ENCODE measurements at regions of chr20 and their contacts with region 1.

Region 1: DNA sequence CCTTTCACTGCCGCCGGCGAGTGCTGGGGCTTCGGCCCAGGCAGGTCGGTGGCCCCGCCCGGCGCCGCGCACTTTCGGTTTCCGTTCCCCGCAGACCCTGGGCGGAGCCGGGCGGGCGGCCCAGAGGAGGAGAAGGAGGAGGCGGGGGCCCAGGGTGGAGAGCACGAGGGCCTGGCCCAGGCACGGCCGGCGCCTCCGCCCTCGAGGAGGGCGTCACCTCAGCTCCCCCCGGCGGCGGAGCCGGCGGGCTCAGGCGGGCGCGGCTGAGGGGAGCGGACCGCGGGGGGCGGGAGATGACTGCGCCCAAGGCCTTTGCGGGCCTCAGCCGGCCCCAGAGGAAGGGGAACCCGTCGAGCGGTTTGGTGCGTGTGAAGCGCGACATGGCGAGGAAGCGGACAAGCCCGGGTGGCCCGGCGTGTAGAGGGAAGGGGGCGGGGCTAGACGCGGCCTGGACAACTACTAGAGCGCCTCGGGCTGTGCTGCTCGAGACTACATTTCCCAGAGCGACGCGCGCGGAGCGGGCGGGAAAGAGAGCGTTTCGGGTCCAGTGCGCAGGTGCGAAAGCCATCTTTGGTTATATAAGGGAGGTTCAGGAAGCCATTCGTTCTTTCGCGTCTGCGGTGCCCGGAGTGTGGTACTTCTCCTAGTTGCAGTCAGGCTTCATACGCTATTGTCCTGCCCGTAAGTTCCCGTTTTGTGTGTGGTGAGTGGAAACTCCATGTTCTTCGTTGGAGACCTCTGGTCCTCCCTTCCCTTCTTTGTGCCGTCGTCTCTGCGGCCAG is at the start of gene ZNFX1:
- DNase-seq: peak; percentile 94 to 99 (median 97)
- ATAC-seq: peak; percentile 92
- H3K4me3 ChIP-seq: peak within 1 kb of the TSS; percentile 80
- H3K4me3 Mint-ChIP-seq: peak within 1 kb of the TSS; percentile 91 to 100 (median 97)
- H3K27ac ChIP-seq: peak within 1 kb of the TSS; percentile 95
- H3K27ac Mint-ChIP-seq: peak within 1 kb of the TSS; percentile 90 to 99 (median 97)
- H3K4me1 ChIP-seq: peaks cover 37 to 61% of the 10 kb centered on the region in 2 donors
- H3K4me1 Mint-ChIP-seq: peaks cover 52 to 80% (median 67%) of the 10 kb centered on the region in 7 donors
- H3K27me3 ChIP-seq: no peaks in the 10 kb centered on the region
- H3K27me3 Mint-ChIP-seq: peaks cover 0 to 4% (median 0%) of the 10 kb centered on the region in 5 donors
- total RNA-seq, gene ZNFX1: 45.0 to 83.7 (median 62.2) TPM

Region 2: GRCh38 chr20:47501483-47502270 is 1776.5 kb before region 1 on chr20 and contains the start of gene NCOA3:
- CTCF ChIA-PET with region 1: no interaction called
- POLR2A ChIA-PET with region 1: no interaction called
- intact Hi-C with region 1: loop called in 1 of 2 experiments (anchors 1 kb)
- DNase-seq: peak; percentile 74 to 94 (median 83)
- ATAC-seq: peak; percentile 95
- H3K4me3 ChIP-seq: peak within 1 kb of the TSS; percentile 86
- H3K4me3 Mint-ChIP-seq: peak within 1 kb of the TSS; percentile 80 to 99 (median 97)
- H3K27ac ChIP-seq: peak within 1 kb of the TSS; percentile 80
- H3K27ac Mint-ChIP-seq: peak within 1 kb of the TSS; percentile 80 to 98 (median 95)
- H3K4me1 ChIP-seq: peaks cover 19 to 28% of the 10 kb centered on the region in 2 donors
- H3K4me1 Mint-ChIP-seq: peaks cover 25 to 48% (median 43%) of the 10 kb centered on the region in 7 donors
- H3K27me3 ChIP-seq: no peaks in the 10 kb centered on the region
- H3K27me3 Mint-ChIP-seq: peaks cover 0 to 2% (median 0%) of the 10 kb centered on the region in 5 donors
- total RNA-seq, gene NCOA3: 75.0 to 115 (median 89.2) TPM

Region 3: DNA sequence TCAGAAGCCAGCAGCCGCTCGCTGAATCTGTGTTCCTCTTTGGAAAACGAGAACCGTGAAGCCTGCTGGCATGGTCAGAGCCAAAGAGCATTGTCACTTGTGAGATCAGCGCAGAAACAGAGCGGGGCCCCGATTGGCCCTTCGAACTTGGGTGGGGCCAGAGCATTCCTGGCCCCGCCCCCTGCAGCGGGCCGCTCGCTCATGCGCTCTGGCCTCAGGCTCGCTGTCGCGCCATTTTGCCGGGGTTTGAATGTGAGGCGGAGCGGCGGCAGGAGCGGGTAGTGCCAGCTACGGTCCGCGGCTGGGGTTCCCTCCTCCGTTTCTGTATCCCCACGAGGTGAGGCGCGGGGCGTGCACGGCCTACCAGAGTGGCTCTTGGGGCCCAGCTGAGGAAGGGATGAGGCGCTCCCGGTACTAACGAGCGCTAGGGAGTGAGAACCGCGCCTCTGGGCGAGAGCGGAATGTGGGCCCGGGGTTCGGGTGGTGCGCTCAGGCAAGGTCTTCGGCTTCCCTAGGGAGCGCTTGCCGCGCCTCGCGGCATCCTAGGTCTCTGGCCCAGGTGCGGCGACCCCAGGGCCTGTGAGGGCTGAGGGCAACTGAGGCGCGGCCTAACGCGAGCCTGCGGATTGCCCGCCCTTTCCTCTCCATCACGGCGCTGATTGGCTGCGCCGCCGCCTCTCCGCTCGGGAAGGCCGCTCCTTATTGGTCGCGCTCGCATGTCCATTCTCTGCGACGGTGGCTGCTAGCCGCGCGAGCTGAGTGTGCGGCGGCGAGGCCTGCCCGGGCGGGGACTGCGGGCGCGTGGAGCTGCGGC is 231.9 kb before region 1 on chr20 and contains the start of gene CSE1L:
- CTCF ChIA-PET with region 1: no interaction called
- POLR2A ChIA-PET with region 1: interaction called, 7 read pairs
- intact Hi-C with region 1: loop called (anchors 1 kb)
- DNase-seq: peak; percentile 90 to 98 (median 95)
- ATAC-seq: peak; percentile 92
- H3K4me3 ChIP-seq: peak within 1 kb of the TSS; percentile 99
- H3K4me3 Mint-ChIP-seq: peak within 1 kb of the TSS; percentile 94 to 99 (median 98)
- H3K27ac ChIP-seq: peak within 1 kb of the TSS; percentile 89
- H3K27ac Mint-ChIP-seq: peak within 1 kb of the TSS; percentile 92 to 100 (median 98)
- H3K4me1 ChIP-seq: peaks cover 11 to 14% of the 10 kb centered on the region in 2 donors
- H3K4me1 Mint-ChIP-seq: peaks cover 24 to 51% (median 42%) of the 10 kb centered on the region in 7 donors
- H3K27me3 ChIP-seq: no peaks in the 10 kb centered on the region
- H3K27me3 Mint-ChIP-seq: peaks cover 0 to 4% (median 0%) of the 10 kb centered on the region in 5 donors
- total RNA-seq, gene CSE1L: 23.3 to 73.0 (median 41.1) TPM

Region 4: DNA sequence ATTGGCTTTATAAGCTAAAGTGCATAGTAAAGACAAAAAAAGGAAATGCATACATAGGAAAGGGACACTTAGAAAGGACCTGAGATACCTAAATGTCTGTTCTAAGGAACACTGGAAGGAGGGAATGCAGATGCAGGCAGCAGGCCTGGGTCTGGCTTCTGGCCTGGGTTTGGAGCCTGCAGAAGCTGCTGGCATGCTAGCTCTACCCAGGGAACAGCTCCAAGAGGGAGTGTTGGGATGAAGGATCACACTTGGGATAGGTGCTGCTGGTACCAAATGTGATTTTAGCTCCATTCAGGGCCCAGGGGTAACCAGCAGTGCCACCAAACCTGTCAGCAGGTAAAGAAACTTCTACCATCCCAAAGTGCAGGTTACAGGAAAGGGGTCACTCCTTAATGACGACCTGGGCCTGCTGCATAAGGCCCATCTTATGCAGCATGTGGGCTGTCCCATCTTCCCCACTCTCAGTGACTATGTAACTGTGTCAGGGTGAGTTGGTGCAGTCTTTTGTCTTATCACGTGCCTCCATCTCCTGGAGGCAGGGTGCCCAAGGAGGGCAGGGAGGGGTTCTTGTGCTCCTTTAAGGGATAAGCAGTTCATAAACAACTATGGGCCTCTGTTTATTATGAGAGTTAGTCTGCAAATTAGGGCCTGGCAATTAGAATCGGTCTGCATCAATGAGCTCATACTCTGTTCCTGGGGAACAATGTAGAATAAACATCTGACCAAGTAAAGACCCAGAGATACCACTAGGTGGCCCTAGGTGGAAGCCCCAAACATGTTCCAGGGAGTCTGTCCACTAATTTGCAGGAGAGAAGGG is 32.1 kb before region 1 on chr20:
- CTCF ChIA-PET with region 1: interaction called, 4 read pairs
- POLR2A ChIA-PET with region 1: interaction called, 3 read pairs
- intact Hi-C with region 1: loop called in 1 of 2 experiments (anchors 1 kb)
- DNase-seq: peak in 5 of 9 donors; percentile 17 to 37 (median 20)
- ATAC-seq: peak; percentile 77
- H3K4me3 ChIP-seq: no peak overlapping the region
- H3K4me3 Mint-ChIP-seq: no peak overlapping the region
- H3K27ac ChIP-seq: peak overlapping the region; percentile 18
- H3K27ac Mint-ChIP-seq: peak overlapping the region in 8 of 9 donors; percentile 1 to 84 (median 62)
- H3K4me1 ChIP-seq: peaks cover 0 to 6% of the 10 kb centered on the region in 2 donors
- H3K4me1 Mint-ChIP-seq: peaks cover 4 to 13% (median 5%) of the 10 kb centered on the region in 7 donors
- H3K27me3 ChIP-seq: no peaks in the 10 kb centered on the region
- H3K27me3 Mint-ChIP-seq: no peaks in the 10 kb centered on the region

Region 5: GRCh38 chr20:49372095-49372726 is 94.0 kb after region 1 on chr20:
- CTCF ChIA-PET with region 1: no interaction called
- POLR2A ChIA-PET with region 1: no interaction called
- intact Hi-C with region 1: no loop called
- DNase-seq: no peak
- ATAC-seq: no peak
- H3K4me3 ChIP-seq: no peak overlapping the region
- H3K4me3 Mint-ChIP-seq: no peak overlapping the region
- H3K27ac ChIP-seq: no peak overlapping the region
- H3K27ac Mint-ChIP-seq: no peak overlapping the region
- H3K4me1 ChIP-seq: no peaks in the 10 kb centered on the region
- H3K4me1 Mint-ChIP-seq: peaks cover 0 to 3% (median 0%) of the 10 kb centered on the region in 7 donors
- H3K27me3 ChIP-seq: no peaks in the 10 kb centered on the region
- H3K27me3 Mint-ChIP-seq: peaks cover 6 to 40% (median 23%) of the 10 kb centered on the region in 5 donors

Region 6: GRCh38 chr20:49713753-49714712 is 435.8 kb after region 1 on chr20 and contains the start of gene B4GALT5:
- CTCF ChIA-PET with region 1: no interaction called
- POLR2A ChIA-PET with region 1: no interaction called
- intact Hi-C with region 1: loop called in 1 of 2 experiments (anchors 1 kb)
- DNase-seq: peak in 8 of 9 donors; percentile 26 to 82 (median 47)
- ATAC-seq: peak; percentile 90
- H3K4me3 ChIP-seq: peak within 1 kb of the TSS; percentile 67
- H3K4me3 Mint-ChIP-seq: peak within 1 kb of the TSS; percentile 86 to 93 (median 90)
- H3K27ac ChIP-seq: peak within 1 kb of the TSS; percentile 66
- H3K27ac Mint-ChIP-seq: peak within 1 kb of the TSS; percentile 53 to 89 (median 81)
- H3K4me1 ChIP-seq: peaks cover 7 to 15% of the 10 kb centered on the region in 2 donors
- H3K4me1 Mint-ChIP-seq: peaks cover 26 to 43% (median 38%) of the 10 kb centered on the region in 7 donors
- H3K27me3 ChIP-seq: no peaks in the 10 kb centered on the region
- H3K27me3 Mint-ChIP-seq: peaks cover 0 to 4% (median 0%) of the 10 kb centered on the region in 5 donors
- total RNA-seq, gene B4GALT5: 3.3 to 23.1 (median 4.6) TPM